Right ventricle myocardium inferior (tissue), 1 donor: ENCODE measurements at regions of chrX and their contacts with region 1.

Region 1: GRCh38 chrX:76253432-76253831 is 80.6 kb downstream of the PBDC1 start:
- DNase-seq: no peak
- ATAC-seq: no peak

Region 2: DNA sequence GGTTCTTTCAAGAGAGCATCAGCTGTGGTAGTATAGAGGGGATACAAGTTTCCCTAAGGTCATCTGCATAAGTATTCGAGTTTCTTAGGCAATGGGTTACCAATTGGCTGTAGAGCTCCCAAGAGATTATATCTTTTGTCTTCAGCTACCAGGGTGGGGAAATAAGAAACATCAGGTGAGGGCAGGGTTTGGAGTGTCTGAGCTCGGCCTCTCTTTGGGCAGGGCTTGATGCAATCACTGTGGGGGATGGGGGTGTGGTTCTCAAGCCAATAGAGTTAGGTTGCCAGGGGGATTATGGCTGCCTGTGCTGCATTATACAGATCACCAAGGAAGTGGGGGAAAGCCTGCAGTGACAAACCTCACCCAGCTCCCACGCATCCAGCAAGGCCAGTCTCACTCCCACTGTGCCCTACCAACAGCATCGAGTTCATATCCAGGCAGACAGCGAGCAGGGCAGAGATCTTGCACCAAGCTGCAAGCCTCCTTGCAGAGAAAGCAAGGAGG is 296.3 kb before region 1 on chrX:
- intact Hi-C with region 1: no loop called
- DNase-seq: no peak
- ATAC-seq: no peak

Region 3: DNA sequence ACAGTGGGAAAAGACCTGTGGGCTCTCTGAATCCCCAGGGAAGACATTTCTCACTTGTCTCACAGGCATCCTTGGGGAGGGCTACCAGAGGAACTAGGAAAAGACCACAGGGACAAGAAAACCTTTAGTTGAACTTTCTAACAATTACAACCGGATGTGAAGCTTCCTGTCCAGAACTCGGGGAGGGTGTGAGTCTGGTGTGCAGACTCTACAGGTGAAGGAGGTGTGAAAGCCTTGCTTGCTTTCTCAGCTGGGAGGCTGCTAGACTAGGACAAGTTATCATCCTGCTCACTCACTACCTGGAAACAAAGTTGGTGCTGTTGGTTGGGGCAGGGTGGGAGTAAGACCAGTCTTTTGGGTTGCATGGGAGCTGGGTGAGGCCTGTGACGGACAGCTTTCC is 239.1 kb before region 1 on chrX:
- intact Hi-C with region 1: no loop called
- DNase-seq: no peak
- ATAC-seq: no peak

Region 4: DNA sequence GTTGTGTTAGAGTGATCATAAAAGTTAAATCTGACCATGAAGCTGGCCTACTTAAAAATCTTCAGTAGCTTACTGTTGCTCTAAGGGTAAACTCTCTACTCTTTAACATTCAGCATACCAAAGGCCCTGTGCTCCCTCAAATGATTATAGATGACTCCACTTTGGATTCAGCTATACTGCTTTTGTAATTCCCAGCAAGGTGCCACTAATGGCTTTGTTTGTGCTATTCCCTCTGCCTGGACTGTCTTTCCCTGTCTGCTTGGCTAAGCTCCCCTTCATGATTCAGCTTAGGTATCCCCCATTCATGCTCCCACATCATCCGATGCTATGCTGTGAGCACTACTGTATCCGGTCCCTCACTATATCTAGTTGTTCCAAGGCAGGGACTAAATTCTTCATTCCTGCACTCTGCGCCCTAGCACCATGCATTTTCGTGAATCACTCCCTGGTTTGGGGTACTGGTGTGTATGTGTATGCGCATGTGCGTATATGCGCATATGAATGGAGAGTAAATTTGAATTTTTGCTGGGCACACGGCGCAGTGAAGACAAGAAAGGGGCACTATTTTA is 81.0 kb before region 1 on chrX:
- intact Hi-C with region 1: loop called (anchors 5 kb)
- DNase-seq: no peak
- ATAC-seq: peak; percentile 49